ENCODE measurements at regions of chr3 and their contacts with region 1.

Region 1: GRCh38 chr3:16516695-16517481 is 3.4 kb upstream of the RFTN1 start:
- DNase-seq: no peak

Region 2: DNA sequence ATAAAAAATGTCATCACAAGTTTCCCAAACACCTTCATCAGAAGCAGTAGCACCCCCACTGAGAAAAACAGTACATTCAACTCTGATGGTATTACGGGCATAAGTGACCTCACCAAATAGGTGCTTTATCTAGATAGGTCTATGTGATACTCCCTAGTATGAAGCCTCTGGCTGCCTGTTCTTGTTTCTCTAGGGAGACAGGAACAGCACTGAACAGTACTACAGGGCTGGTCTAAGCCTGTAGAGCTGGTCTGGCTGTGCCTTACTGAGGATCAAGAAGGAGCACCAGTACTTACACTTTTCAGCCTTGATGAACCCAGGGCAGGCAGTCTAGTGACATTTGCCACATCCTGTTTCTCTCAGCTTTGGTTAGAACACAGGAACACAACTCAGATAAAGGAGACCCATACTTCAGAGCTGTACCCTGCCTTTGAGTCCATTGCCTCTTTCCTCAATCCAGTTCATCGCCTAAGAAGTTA is 216.0 kb before region 1 on chr3:
- intact Hi-C with region 1: loop called in 1 of 2 experiments (anchors 5 kb)
- DNase-seq: no peak

Region 3: DNA sequence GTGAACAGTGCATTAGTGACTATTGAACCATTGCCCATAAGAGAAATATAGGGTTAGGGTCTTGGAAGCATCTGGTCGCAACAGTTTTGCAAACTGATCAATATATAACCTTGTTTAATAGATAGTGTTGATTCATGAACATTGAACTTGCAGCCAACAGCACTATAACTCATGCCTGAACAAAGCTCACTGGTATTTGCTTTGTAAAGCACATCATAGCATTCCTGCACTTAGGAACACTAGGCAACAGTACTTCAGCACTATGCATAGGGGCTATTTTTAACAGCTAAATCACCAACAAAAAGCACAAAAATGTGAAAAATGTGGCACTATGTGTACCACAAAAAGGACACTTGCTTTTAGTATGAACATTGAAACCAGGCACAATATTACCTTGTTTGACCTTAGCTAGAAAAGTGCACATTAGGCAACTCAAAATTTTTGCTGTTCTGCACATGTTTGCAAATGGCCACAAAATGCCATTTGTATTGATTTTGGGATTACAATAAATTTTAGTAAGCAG is 183.9 kb before region 1 on chr3:
- intact Hi-C with region 1: no loop called
- DNase-seq: no peak

Region 4: DNA sequence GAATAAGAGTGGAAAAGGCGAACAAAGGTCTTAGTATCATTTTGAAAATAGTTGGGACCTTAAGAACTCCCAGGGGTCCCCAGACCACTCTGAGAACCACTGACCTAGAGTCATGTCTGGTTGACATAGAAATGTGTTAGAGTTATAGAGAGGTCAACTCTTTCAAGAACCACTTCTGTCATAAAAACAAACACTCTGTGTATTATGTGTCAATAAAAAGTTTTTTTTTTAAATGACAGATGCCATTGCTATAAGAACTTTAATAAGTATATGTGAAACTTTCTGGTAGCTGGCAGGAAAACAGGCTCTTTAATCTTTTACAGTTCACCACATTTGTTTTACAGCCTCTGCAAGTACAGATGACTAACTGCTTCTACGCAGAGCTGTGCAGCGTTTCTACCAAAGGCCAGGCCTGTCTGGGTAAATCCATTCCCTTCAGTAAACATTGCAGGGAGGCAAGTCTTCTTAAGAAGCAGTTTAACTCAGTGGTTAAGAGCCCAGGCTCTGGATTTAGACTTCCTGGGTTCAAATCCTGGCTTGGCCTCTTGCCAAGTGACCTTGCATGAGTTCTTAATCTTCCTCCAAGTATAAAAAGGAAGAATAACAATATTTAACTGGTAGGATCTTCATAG is 60.0 kb before region 1 on chr3:
- intact Hi-C with region 1: no loop called
- DNase-seq: no peak

Measured in posterior vena cava (tissue), 2 donors.